A549 (cell line): ENCODE measurements at regions of chr15 and their contacts with region 1.

Region 1: DNA sequence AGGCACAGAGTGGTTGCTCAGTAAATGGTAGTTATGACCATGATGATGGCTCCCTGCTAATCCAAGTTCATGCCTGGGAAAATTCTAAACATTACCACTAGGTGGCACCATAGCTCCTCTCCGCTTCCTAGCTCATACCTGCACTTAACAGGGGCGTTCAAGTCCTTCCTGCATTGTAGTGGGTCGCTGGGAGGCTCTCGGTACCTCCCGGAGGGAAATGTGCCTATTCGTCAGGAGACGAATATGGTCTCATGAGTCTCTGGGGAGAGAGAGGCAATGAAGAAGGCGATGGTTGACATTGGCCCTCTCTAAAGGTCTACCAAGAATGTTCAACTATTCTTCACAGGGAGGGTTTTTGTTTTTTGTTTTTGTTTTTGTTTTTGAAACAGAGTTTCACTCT is 10.9 kb downstream of the MESP1 start:
- DNase-seq: peak; percentile 83 to 85
- ATAC-seq: peak; percentile 87 to 95
- H3K4me3 ChIP-seq: no peak overlapping the region
- H3K27ac ChIP-seq: peak overlapping the region in 1 of 2 experiments; percentile 36; a peak in 1 of 6 replicates
- H3K4me1 ChIP-seq: no peaks in the 10 kb centered on the region
- CTCF ChIP-seq: peak; percentile 96
- EP300 ChIP-seq: no peak
- POLR2A ChIP-seq: no peak
- RAD21 ChIP-seq: peak; percentile 89 to 95

Region 2: DNA sequence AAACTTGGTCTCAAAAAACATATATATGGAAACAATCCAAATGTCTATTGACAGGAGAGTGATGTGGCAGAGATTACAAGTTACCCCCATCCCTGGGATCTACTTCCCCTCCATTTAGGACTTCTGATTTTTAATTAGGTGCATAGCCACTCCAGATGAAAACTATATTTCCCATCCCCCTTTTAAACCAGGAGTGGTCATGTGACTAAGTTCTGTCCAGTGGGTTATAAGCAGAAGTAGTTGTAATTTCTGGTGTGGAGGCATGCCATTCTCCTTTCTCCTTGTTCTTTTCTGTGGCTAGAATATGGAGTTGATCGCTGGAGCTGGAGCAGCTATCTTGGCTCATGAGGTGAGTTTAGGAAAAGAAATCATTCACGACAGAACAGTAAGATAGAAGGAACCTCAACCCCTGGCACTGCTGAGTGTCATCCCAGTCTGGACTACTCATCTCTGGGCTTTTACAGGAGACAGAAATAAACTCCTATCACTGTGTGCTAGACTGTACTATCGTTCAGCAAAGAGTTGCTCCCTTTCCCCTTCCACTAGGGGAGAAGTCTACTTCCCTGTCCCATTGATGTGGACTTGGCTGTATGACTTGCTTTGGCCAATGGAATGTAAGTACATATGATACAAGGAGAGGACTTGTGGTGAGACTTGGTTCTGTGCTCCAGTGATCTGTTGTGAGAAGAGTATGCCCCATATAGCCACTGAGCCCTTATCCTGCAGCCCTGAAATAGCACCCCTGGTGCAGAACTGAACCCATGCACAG is 79.8 kb before region 1 on chr15:
- CTCF ChIA-PET with region 1: no interaction called
- POLR2A ChIA-PET with region 1: no interaction called
- DNase-seq: peak in 1 of 2 experiments; percentile 29
- ATAC-seq: peak; percentile 35 to 67; a peak in 5 of 6 replicates
- H3K4me3 ChIP-seq: no peak overlapping the region
- H3K27ac ChIP-seq: no peak overlapping the region
- H3K4me1 ChIP-seq: peaks cover 5% of the 10 kb centered on the region; the same call in 1 of the 3 replicates
- CTCF ChIP-seq: no peak
- EP300 ChIP-seq: no peak
- POLR2A ChIP-seq: no peak
- RAD21 ChIP-seq: no peak

Region 3: DNA sequence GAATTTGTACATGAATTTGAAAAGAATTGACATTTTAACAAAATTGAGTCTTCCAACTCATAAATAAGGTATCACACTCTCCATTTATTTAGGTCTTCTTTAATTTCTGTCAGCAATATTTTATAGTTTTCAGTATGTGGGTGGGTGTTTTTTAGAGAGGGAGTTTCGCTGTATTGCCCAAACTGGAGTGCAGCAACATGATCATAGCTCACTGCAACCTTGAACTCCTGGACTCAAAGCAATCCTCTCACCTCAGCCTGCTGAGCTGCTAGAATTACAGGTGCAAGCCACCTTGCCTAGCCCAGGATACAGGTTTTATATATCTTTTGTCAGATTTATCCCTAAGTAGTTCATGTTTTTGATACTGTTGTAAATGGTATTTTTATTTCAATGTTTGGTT is 44.9 kb before region 1 on chr15:
- CTCF ChIA-PET with region 1: no interaction called
- POLR2A ChIA-PET with region 1: no interaction called
- DNase-seq: no peak
- ATAC-seq: no peak
- H3K4me3 ChIP-seq: no peak overlapping the region
- H3K27ac ChIP-seq: no peak overlapping the region
- H3K4me1 ChIP-seq: 0 out of 3 replicates have a peak, but pooled peaks cover 3% of the 10 kb centered on the region
- CTCF ChIP-seq: no peak
- EP300 ChIP-seq: no peak
- POLR2A ChIP-seq: no peak
- RAD21 ChIP-seq: no peak

Region 4: DNA sequence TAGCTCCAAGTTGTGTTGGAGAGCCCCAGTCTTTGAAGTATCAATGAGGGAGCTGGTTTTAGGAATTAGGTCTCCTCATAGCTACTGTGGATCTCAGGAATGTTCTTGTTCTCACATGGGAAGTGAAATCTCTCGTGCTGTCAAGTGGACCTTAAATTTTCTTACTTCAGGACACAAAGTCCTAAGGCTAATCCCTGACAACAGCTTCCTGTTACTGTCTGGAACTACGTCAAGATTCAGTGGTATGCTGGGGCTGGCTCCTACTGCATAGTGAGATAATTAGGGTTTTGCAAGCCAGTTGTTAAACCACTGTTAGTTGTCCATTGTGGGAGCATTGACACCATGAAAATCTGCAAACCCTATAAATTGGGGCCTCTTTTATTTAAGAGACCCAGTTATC is 11.9 kb before region 1 on chr15:
- CTCF ChIA-PET with region 1: interaction called, 43 read pairs
- POLR2A ChIA-PET with region 1: no interaction called
- DNase-seq: no peak
- ATAC-seq: no peak
- H3K4me3 ChIP-seq: no peak overlapping the region
- H3K27ac ChIP-seq: no peak overlapping the region
- H3K4me1 ChIP-seq: no peaks in the 10 kb centered on the region
- CTCF ChIP-seq: no peak
- EP300 ChIP-seq: no peak
- POLR2A ChIP-seq: no peak
- RAD21 ChIP-seq: no peak